PC-9 (cell line): ENCODE measurements at regions of chr6 and their contacts with region 1.

Region 1: GRCh38 chr6:116531675-116532570 is 13.6 kb downstream of the TRAPPC3L start:
- DNase-seq: peak; percentile 47 to 54
- H3K4me3 ChIP-seq: no peak overlapping the region
- H3K27ac ChIP-seq: no peak overlapping the region
- H3K4me1 ChIP-seq: no peaks in the 10 kb centered on the region; the same call in 1 of the 2 replicates
- H3K27me3 ChIP-seq: no peaks in the 10 kb centered on the region
- CTCF ChIP-seq: peak; percentile 91

Region 2: DNA sequence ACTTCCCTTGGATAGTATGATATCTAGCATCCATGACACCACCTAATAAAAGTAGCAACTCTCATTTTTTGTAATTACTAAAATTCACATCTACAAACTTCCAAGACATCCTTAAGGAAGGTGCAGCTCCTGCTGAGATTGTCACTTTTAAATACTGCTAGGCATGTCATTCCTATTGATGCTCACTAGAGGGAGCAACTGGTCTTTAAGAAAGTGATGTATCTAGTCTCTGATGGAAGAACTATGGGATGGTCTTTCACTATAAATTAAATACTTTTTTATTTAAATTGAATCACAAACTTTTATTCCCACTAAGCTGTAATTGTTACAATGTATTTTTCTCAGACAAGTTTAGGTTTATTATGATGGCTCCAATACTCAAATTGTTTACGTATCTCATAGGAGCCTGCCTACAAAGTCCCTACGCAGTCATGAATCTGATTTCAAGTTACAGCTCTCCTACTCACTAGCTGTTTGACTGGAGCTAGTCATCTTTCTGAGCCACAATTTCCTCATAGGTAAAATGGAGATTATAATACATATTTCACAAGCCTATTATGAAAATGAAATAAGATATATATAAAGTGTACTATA is 244.1 kb before region 1 on chr6:
- CTCF ChIA-PET with region 1: interaction called, 7 read pairs
- POLR2A ChIA-PET with region 1: no interaction called
- intact Hi-C with region 1: loop called (anchors 1 kb)
- DNase-seq: peak in 1 of 2 experiments; percentile 61
- H3K4me3 ChIP-seq: no peak overlapping the region
- H3K27ac ChIP-seq: no peak overlapping the region
- H3K4me1 ChIP-seq: no peaks in the 10 kb centered on the region
- H3K27me3 ChIP-seq: no peaks in the 10 kb centered on the region
- CTCF ChIP-seq: peak; percentile 99

Region 3: DNA sequence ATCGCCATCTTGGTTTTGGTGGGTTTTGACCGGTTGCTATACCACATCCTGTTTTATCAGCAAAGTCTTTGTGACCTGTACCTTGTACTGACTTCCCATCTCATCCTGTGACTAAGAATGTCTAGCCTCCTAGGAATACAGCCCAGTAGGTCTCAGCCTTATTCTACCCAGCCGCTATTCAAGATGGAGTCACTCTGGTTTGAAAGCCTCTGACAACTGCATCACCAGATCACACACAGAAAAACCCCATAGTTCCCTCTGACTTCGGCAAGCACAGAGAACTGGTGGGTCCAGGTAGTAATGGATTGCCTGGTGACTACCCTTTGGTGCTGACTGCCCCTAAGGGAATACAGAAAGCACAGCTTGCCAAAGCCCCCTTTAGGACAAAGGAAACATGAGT is 74.0 kb after region 1 on chr6:
- CTCF ChIA-PET with region 1: no interaction called
- POLR2A ChIA-PET with region 1: no interaction called
- intact Hi-C with region 1: no loop called
- DNase-seq: no peak
- H3K4me3 ChIP-seq: no peak overlapping the region
- H3K27ac ChIP-seq: no peak overlapping the region
- H3K4me1 ChIP-seq: no peaks in the 10 kb centered on the region
- H3K27me3 ChIP-seq: no peaks in the 10 kb centered on the region
- CTCF ChIP-seq: no peak

Region 4: GRCh38 chr6:116847227-116847626 is 315.3 kb after region 1 on chr6:
- CTCF ChIA-PET with region 1: no interaction called
- POLR2A ChIA-PET with region 1: no interaction called
- intact Hi-C with region 1: loop called (anchors 10 kb)
- DNase-seq: no peak
- H3K4me3 ChIP-seq: no peak overlapping the region
- H3K27ac ChIP-seq: no peak overlapping the region
- H3K4me1 ChIP-seq: no peaks in the 10 kb centered on the region
- H3K27me3 ChIP-seq: no peaks in the 10 kb centered on the region
- CTCF ChIP-seq: peak; percentile 60

Region 5: GRCh38 chr6:117118490-117118889 is 586.6 kb after region 1 on chr6:
- CTCF ChIA-PET with region 1: no interaction called
- POLR2A ChIA-PET with region 1: no interaction called
- intact Hi-C with region 1: no loop called
- DNase-seq: no peak
- H3K4me3 ChIP-seq: no peak overlapping the region
- H3K27ac ChIP-seq: no peak overlapping the region
- H3K4me1 ChIP-seq: no peaks in the 10 kb centered on the region
- H3K27me3 ChIP-seq: no peaks in the 10 kb centered on the region
- CTCF ChIP-seq: no peak

Region 6: GRCh38 chr6:117771403-117771802 is 1239.5 kb after region 1 on chr6:
- CTCF ChIA-PET with region 1: no interaction called
- POLR2A ChIA-PET with region 1: no interaction called
- intact Hi-C with region 1: no loop called
- DNase-seq: no peak
- H3K4me3 ChIP-seq: no peak overlapping the region
- H3K27ac ChIP-seq: no peak overlapping the region
- H3K4me1 ChIP-seq: no peaks in the 10 kb centered on the region
- H3K27me3 ChIP-seq: no peaks in the 10 kb centered on the region
- CTCF ChIP-seq: no peak